Activated CD8-positive, alpha-beta T cell treated with anti-CD3 and anti-CD28 coated beads for 36 hours (primary cell): ENCODE measurements at regions of chr17 and their contacts with region 1.

Region 1: DNA sequence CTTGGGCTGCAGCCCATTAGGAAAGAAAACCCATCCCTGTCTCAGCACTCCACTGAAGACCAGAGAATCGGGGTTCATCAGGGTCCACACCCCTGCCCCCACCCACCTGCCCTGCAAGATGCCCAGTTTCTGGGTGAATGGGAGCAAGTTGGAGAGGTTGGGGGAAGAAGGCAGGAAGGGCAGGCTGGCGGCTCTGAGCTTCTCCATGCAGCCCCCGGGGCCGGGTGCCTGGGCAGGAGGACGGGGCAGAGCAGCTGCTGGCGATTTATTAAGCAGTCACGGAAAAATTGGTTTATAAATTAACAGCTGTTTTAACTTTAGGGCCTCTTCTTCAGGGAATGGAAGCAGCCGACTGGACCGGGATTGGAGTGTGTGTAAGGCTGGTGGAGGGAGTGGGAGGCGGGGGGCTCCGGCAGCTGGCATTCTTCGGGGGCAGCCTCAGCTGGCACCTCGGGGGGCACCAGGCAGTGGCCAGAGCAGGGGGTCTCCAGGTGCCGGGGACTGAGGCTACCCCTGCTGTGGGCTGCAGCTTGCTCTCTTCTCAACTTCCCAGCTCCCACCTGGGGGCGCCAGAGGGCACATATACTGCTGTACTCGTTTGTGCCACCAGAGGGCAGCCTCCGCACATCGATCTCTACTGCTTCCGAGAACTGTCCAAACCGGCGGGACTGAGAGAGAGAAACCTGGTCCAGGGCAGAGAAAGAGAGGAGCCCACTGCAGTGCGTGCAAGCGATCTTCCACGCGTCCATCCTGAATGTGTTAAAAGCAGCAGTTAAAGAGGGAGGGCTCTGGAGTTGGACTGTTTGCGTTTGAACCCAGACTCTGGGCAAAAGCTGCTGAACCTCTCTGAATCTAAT is 5.0 kb upstream of the PPP1R1B start:
- DNase-seq: peak; percentile 92
- ATAC-seq: peak; percentile 78
- H3K4me3 Mint-ChIP-seq: peak overlapping the region; percentile 65
- H3K27ac Mint-ChIP-seq: peak overlapping the region; percentile 78
- H3K4me1 Mint-ChIP-seq: peaks cover 18% of the 10 kb centered on the region
- H3K27me3 Mint-ChIP-seq: peaks cover 14% of the 10 kb centered on the region
- CTCF ChIP-seq: peak; percentile 100

Region 2: DNA sequence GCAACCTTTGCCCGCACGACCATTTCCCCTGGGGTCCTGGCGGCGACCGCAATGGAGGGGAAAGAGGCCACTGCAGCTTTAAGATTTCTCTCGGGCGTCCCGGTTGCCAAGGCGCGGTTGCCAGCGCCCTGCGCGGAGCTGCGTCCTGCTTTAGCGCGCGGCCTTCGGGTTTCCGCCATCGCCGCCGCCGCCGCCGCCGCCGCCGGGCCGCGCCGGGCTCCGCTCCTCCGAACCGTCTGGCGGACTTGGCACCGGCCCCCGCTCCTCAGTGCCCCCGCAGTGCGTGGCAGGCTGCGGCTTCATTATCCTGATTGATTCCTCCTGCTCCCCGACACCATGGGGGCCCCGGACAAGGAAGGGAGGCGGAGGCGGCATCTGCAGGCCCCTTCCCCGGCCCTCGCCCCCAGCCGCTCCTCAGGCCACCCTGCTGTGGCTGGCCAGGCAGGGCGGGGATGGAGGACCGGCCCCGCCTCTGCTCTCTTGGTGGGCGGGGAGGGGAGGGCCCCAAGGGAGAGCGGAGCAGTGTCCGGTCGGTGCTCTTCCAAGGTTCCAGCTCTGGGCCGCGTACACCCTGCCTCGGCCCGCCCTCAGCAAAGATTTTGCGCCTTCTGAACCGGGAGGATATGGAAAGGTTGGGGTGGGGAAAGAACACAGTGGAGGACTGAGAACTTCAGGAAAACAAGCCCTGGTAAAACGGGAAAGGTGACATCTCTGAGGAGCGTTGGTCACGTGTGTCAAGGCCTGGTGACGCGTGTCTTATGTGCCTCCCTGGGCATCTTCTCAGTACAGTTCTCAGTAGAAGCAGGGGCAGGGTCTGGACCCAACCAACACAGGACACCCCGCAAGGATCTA is 48.1 kb before region 1 on chr17:
- CTCF ChIA-PET with region 1: interaction called, 34 read pairs
- POLR2A ChIA-PET with region 1: no interaction called
- intact Hi-C with region 1: no loop called
- DNase-seq: peak; percentile 61
- ATAC-seq: peak; percentile 83
- H3K4me3 Mint-ChIP-seq: peak overlapping the region; percentile 81
- H3K27ac Mint-ChIP-seq: no peak overlapping the region
- H3K4me1 Mint-ChIP-seq: peaks cover 3% of the 10 kb centered on the region
- H3K27me3 Mint-ChIP-seq: peaks cover 7% of the 10 kb centered on the region
- CTCF ChIP-seq: no peak

Region 3: GRCh38 chr17:39605492-39606433 is 16.0 kb before region 1 on chr17:
- CTCF ChIA-PET with region 1: interaction called, 33 read pairs
- POLR2A ChIA-PET with region 1: interaction called, 4 read pairs
- intact Hi-C with region 1: no loop called
- DNase-seq: peak; percentile 40
- ATAC-seq: peak; percentile 52
- H3K4me3 Mint-ChIP-seq: no peak overlapping the region
- H3K27ac Mint-ChIP-seq: no peak overlapping the region
- H3K4me1 Mint-ChIP-seq: peaks cover 18% of the 10 kb centered on the region
- H3K27me3 Mint-ChIP-seq: peaks cover 67% of the 10 kb centered on the region
- CTCF ChIP-seq: no peak

Region 4: GRCh38 chr17:39653662-39654331 is 32.0 kb after region 1 on chr17:
- CTCF ChIA-PET with region 1: interaction called, 111 read pairs
- POLR2A ChIA-PET with region 1: interaction called, 3 read pairs
- intact Hi-C with region 1: no loop called
- DNase-seq: peak; percentile 89
- ATAC-seq: peak; percentile 91
- H3K4me3 Mint-ChIP-seq: no peak overlapping the region
- H3K27ac Mint-ChIP-seq: no peak overlapping the region
- H3K4me1 Mint-ChIP-seq: peaks cover 48% of the 10 kb centered on the region
- H3K27me3 Mint-ChIP-seq: no peaks in the 10 kb centered on the region
- CTCF ChIP-seq: peak; percentile 96

Region 5: GRCh38 chr17:39730095-39730921 is 108.6 kb after region 1 on chr17 and contains the start of gene MIEN1:
- CTCF ChIA-PET with region 1: interaction called, 54 read pairs
- POLR2A ChIA-PET with region 1: interaction called, 3 read pairs
- intact Hi-C with region 1: no loop called
- DNase-seq: peak; percentile 94
- ATAC-seq: peak; percentile 96
- H3K4me3 Mint-ChIP-seq: peak within 1 kb of the TSS; percentile 93
- H3K27ac Mint-ChIP-seq: peak within 1 kb of the TSS; percentile 91
- H3K4me1 Mint-ChIP-seq: peaks cover 17% of the 10 kb centered on the region
- H3K27me3 Mint-ChIP-seq: no peaks in the 10 kb centered on the region
- CTCF ChIP-seq: peak; percentile 99
- total RNA-seq, gene MIEN1: 32.5 to 34.0 TPM